Heart left ventricle (tissue), 16 donors: ENCODE measurements at regions of chr14 and their contacts with region 1.

Region 1: GRCh38 chr14:75258615-75259466 is 19.8 kb upstream of the FOS start:
- DNase-seq: peak; percentile 99 to 100 (median 100)
- ATAC-seq: peak; percentile 95 to 98 (median 97)
- H3K4me3 ChIP-seq: peak overlapping the region; percentile 11 to 61 (median 49)
- H3K27ac ChIP-seq: peak overlapping the region; percentile 87 to 98 (median 95)
- H3K4me1 ChIP-seq: peaks cover 0 to 40% (median 26%) of the 10 kb centered on the region in 12 donors
- H3K27me3 ChIP-seq: no peaks in the 10 kb centered on the region
- CTCF ChIP-seq: no peak
- POLR2A ChIP-seq: peak in 1 of 2 donors; percentile 72

Region 2: DNA sequence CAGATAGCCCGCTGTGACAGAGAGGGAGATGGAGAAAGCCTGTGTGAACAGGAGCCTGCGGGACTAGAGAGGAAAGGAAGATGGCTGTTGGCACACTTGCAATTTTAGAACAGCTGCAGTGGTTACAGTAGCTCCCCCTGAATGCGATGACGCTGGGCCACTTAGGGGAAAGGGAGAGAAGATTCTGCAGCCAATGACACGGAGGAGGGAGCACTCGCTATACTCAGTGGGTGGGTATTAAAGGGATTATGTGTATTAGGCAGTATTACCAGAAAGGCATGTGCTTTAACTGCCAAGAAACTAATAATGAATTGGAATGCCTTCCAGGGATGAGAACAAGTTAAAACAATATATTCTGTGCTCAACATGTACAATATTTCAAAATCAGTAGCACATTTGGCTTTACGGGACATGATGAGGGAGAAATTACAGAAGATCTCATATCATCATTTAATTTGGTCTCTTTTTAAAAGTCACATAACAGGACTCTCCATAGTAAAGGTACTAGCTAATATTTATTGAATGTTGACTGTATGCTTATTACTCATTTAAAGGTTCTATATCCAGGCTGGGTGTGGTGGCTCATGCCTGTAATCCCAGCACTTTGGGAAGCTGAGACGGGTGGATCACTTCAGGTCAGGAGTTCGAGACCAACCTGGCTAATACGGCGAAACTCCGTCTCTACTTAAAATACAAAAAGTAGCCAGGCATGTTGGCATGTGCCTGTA is 16.1 kb before region 1 on chr14:
- intact Hi-C with region 1: loop called in 1 of 10 experiments (anchors 2 kb)
- DNase-seq: peak in 3 of 5 donors; percentile 41 to 45 (median 45)
- ATAC-seq: peak in 3 of 4 donors; percentile 8 to 43 (median 27)
- H3K4me3 ChIP-seq: no peak overlapping the region
- H3K27ac ChIP-seq: no peak overlapping the region
- H3K4me1 ChIP-seq: peaks cover 0 to 21% (median 18%) of the 10 kb centered on the region in 12 donors
- H3K27me3 ChIP-seq: no peaks in the 10 kb centered on the region
- CTCF ChIP-seq: no peak
- POLR2A ChIP-seq: no peak

Region 3: DNA sequence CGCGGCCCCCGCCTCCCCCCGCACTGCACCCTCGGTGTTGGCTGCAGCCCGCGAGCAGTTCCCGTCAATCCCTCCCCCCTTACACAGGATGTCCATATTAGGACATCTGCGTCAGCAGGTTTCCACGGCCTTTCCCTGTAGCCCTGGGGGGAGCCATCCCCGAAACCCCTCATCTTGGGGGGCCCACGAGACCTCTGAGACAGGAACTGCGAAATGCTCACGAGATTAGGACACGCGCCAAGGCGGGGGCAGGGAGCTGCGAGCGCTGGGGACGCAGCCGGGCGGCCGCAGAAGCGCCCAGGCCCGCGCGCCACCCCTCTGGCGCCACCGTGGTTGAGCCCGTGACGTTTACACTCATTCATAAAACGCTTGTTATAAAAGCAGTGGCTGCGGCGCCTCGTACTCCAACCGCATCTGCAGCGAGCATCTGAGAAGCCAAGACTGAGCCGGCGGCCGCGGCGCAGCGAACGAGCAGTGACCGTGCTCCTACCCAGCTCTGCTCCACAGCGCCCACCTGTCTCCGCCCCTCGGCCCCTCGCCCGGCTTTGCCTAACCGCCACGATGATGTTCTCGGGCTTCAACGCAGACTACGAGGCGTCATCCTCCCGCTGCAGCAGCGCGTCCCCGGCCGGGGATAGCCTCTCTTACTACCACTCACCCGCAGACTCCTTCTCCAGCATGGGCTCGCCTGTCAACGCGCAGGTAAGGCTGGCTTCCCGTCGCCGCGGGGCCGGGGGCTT is 19.8 kb after region 1 on chr14 and contains the start of gene FOS:
- intact Hi-C with region 1: loop called in 8 of 10 experiments (anchors 1 to 2 kb)
- DNase-seq: peak; percentile 94 to 95 (median 94)
- ATAC-seq: peak; percentile 73 to 82 (median 80)
- H3K4me3 ChIP-seq: peak within 1 kb of the TSS; percentile 56 to 98 (median 88)
- H3K27ac ChIP-seq: peak within 1 kb of the TSS; percentile 91 to 100 (median 99)
- H3K4me1 ChIP-seq: peaks cover 6 to 71% (median 32%) of the 10 kb centered on the region in 12 donors
- H3K27me3 ChIP-seq: no peaks in the 10 kb centered on the region
- CTCF ChIP-seq: no peak
- POLR2A ChIP-seq: peak; percentile 85 to 99
- total RNA-seq, gene FOS: 6.5 to 549 (median 28.6) TPM